ENCODE measurements at regions of chr2 and their contacts with region 1.

Region 1: GRCh38 chr2:60674524-60675165 is 81.4 kb upstream of the PAPOLG start:
- DNase-seq: peak; percentile 92
- ATAC-seq: peak; percentile 97
- H3K4me3 Mint-ChIP-seq: no peak overlapping the region
- H3K27ac Mint-ChIP-seq: no peak overlapping the region
- H3K4me1 Mint-ChIP-seq: peaks cover 26% of the 10 kb centered on the region
- H3K27me3 Mint-ChIP-seq: no peaks in the 10 kb centered on the region; the same call in 1 of the 2 replicates
- CTCF ChIP-seq: peak; percentile 75

Region 2: DNA sequence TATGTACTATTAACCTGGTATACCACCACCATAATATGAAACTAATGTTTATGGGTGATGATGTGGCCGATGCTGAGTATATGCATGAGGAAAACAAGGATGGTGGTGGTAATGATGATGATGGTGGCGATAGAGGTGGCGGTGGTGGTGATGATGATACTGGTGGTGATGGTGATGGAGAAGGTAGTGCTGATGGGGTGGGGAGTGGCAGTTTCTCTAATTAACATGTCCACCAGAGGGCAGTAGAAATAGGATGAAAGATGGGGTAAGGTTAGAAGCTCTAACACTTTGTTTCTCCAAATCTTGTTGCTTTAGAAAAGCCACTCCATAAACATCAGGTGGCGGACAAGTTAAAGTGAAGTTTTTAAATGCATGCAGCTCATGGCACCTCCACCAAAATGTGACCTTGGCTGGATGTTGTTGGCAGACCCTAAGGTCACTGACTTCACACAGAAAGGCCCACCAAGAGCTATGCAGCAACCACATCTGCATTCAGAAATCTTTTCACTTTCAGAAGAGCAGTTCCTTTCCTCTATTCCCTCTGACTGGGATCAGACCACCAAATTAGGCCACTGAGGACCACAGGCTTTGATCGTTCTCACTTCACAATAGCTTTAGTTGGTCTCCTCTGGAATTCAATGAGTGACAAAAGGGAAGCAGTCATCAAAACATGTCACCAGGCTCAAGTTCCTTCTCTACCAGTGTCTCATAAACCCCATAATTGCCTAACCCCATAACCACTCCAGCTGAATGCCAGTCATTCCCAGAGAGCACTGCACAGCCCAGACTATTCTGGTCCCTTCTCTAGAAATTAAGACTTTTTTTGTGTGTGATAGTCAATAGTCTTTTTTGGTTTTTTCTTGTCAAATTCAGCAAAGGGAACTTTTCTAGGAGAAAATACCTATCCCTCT is 113.7 kb before region 1 on chr2:
- CTCF ChIA-PET with region 1: interaction called, 25 read pairs
- POLR2A ChIA-PET with region 1: no interaction called
- DNase-seq: no peak
- ATAC-seq: peak; percentile 71
- H3K4me3 Mint-ChIP-seq: no peak overlapping the region
- H3K27ac Mint-ChIP-seq: no peak overlapping the region
- H3K4me1 Mint-ChIP-seq: peaks cover 31% of the 10 kb centered on the region
- H3K27me3 Mint-ChIP-seq: peaks cover 19% of the 10 kb centered on the region
- CTCF ChIP-seq: peak; percentile 39; the same call in 1 of the 2 replicates

Region 3: DNA sequence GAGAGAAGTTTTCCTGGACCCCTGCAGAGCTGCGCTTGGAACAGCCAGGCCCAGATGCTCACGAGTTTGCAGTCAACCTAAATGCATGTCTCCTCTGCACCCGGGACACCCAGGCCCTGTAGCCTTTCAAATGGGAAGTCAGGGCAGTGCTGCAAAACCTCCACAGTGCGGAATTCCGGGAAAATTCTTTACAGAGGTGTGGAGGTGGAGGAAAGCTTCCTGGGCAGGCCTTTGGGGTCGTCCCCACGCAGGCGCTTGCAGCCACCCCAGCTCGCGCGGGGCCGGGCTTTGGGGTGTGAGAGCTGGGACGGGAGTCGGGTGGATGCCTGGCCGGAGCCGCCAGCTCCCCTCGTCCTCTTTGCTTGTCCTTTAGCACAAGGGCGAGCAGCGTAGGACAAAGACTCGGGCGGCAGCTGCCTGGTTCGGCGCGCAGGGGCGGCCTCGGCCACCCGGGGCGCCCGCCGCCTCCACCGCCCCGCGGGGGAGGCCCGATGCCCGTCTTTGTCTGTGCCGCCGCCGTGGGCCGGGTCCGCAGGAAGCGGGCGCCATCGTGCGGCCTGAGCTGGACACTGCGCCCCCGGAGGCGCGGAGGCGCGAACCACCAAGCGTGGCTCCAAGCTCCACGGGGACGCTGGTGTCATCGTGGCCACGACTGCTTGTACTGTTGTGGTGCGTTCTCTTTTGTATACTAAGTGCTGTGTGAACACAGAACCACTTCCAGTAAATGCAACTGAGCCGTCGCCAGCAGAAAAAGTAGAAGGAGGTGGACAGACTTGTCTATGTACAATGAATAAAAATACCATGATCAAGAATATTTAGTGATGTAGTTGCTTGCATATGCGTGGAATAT is 93.0 kb before region 1 on chr2:
- CTCF ChIA-PET with region 1: interaction called, 49 read pairs
- POLR2A ChIA-PET with region 1: no interaction called
- DNase-seq: peak; percentile 76
- ATAC-seq: peak; percentile 88
- H3K4me3 Mint-ChIP-seq: peak overlapping the region; percentile 67
- H3K27ac Mint-ChIP-seq: no peak overlapping the region
- H3K4me1 Mint-ChIP-seq: peaks cover 9% of the 10 kb centered on the region
- H3K27me3 Mint-ChIP-seq: peaks cover 41% of the 10 kb centered on the region
- CTCF ChIP-seq: peak; percentile 95

Region 4: DNA sequence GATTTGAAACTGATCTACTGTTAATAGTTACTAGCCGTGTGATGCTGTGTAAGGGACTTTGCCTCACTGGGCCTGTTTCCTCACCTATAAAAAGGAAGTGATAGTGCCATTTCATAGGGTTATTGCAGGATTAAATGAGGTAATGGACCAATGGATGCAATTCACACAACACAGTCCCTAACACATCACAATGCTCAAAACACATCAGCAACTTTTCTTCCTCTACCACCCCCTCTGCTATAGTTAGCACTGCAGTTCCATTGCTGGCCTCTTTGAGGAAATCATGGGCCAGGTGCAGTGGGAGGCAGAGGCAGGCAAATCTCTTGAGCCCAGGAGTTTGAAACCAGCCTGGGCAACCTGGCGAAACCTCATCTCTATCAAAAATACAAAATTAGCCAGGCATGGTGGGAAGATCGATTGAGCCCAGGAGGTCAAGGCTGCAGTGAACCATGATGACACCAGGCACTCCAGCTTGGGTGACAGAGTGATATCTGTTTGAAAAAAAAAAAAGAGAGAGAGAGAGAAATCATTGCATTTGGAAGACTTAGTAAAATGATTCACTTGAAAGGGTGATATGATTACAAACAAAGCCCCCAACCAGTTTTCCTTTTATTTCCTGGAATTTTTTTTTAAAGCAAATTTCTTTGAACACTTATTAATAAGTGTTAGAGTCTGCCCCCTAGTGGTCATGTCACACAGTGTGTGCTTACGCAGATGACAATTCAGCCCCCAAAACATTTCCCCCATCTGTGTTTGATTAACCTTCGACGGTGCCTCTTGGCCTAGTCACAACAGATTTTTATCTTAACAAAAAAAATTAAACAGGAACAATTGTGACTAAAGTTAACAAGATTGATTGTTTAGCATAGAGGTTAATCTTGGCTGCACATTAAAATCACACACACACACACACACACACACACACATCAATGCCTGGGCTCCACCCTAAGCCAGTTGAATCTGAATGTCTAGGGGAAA is 32.5 kb before region 1 on chr2:
- CTCF ChIA-PET with region 1: interaction called, 39 read pairs
- POLR2A ChIA-PET with region 1: no interaction called
- DNase-seq: peak; percentile 39
- ATAC-seq: peak; percentile 86
- H3K4me3 Mint-ChIP-seq: no peak overlapping the region
- H3K27ac Mint-ChIP-seq: no peak overlapping the region
- H3K4me1 Mint-ChIP-seq: peaks cover 12% of the 10 kb centered on the region; the same call in 1 of the 2 replicates
- H3K27me3 Mint-ChIP-seq: no peaks in the 10 kb centered on the region; the same call in 1 of the 2 replicates
- CTCF ChIP-seq: peak; percentile 69

Region 5: GRCh38 chr2:60659026-60659425 is 15.6 kb before region 1 on chr2:
- CTCF ChIA-PET with region 1: interaction called, 24 read pairs
- POLR2A ChIA-PET with region 1: interaction called, 3 read pairs
- DNase-seq: no peak
- ATAC-seq: peak; percentile 62; the same call in 1 of the 2 replicates
- H3K4me3 Mint-ChIP-seq: no peak overlapping the region
- H3K27ac Mint-ChIP-seq: no peak overlapping the region
- H3K4me1 Mint-ChIP-seq: no peaks in the 10 kb centered on the region
- H3K27me3 Mint-ChIP-seq: no peaks in the 10 kb centered on the region
- CTCF ChIP-seq: no peak

Region 6: GRCh38 chr2:60707750-60708371 is 33.2 kb after region 1 on chr2:
- CTCF ChIA-PET with region 1: interaction called, 14 read pairs
- POLR2A ChIA-PET with region 1: no interaction called
- DNase-seq: peak; percentile 30
- ATAC-seq: peak; percentile 74
- H3K4me3 Mint-ChIP-seq: no peak overlapping the region
- H3K27ac Mint-ChIP-seq: no peak overlapping the region
- H3K4me1 Mint-ChIP-seq: peaks cover 8% of the 10 kb centered on the region
- H3K27me3 Mint-ChIP-seq: no peaks in the 10 kb centered on the region
- CTCF ChIP-seq: peak; percentile 63; the same call in 1 of the 2 replicates

Measured in WTC11 (cell line).